ENCODE measurements at regions of chr1 and their contacts with region 1.

Region 1: GRCh38 chr1:228794173-228794572 is 58.9 kb downstream of the RHOU start:
- DNase-seq: no peak
- H3K4me3 ChIP-seq: no peak overlapping the region
- H3K27ac ChIP-seq: no peak overlapping the region
- H3K4me1 ChIP-seq: no peaks in the 10 kb centered on the region
- H3K27me3 ChIP-seq: no peaks in the 10 kb centered on the region
- CTCF ChIP-seq: no peak
- POLR2A ChIP-seq: no peak

Region 2: DNA sequence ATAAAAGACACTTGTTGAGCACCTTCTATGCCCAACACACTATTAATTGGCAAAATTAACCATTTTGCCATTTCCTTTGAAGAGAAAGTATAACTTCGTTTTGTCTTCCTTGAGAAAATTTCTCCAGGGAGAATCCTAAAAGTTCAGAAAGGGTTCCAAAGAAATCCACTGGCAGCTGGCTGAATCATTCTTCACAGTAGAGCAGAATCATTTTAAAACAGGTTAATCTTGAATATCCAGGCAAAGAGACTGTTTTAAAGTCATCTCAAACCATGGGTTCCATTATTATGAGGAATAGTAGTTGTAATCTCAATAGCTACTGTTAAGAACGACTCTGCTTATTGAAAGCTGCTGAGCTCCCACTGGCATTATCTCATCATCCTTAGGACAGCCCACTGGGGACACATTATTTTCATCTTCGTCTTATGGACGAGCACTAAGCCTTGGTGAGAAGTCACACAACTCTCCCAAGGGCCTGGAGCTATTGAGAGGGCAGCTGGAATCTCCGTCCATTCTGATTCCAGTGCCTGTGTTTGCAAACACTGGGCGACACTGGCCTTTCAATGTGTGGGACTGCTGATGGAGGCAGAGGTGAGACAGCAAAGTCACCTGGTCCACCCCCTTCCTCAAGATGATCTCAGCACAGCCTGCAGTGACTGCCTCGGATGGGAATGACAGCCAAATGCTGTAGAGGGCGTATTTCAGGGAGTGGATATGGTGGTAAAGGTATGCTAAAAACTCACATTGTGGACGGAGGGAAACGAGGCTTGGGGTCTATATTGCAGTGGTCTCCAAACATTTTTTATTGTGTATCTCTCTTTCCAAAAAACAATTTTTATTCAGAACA is 1647.2 kb after region 1 on chr1:
- intact Hi-C with region 1: loop called (anchors 10 kb)
- DNase-seq: no peak
- H3K4me3 ChIP-seq: no peak overlapping the region
- H3K27ac ChIP-seq: no peak overlapping the region
- H3K4me1 ChIP-seq: no peaks in the 10 kb centered on the region
- H3K27me3 ChIP-seq: peaks cover 0 to 25% of the 10 kb centered on the region in 2 donors
- CTCF ChIP-seq: no peak
- POLR2A ChIP-seq: no peak

Region 3: GRCh38 chr1:230509281-230509977 is 1715.3 kb after region 1 on chr1:
- intact Hi-C with region 1: loop called (anchors 10 kb)
- DNase-seq: no peak
- H3K4me3 ChIP-seq: no peak overlapping the region
- H3K27ac ChIP-seq: no peak overlapping the region
- H3K4me1 ChIP-seq: no peaks in the 10 kb centered on the region
- H3K27me3 ChIP-seq: no peaks in the 10 kb centered on the region
- CTCF ChIP-seq: no peak
- POLR2A ChIP-seq: no peak

Measured in breast epithelium (tissue), 4 donors.